ENCODE measurements at regions of chr13 and their contacts with region 1.

Region 1: GRCh38 chr13:50512474-50513299 is 330.8 kb downstream of the DLEU7 start:
- DNase-seq: peak; percentile 95
- H3K4me3 ChIP-seq: peak overlapping the region; percentile 65
- H3K27ac ChIP-seq: peak overlapping the region; percentile 98
- H3K4me1 ChIP-seq: peaks cover 78% of the 10 kb centered on the region
- CTCF ChIP-seq: peak; percentile 68

Region 2: GRCh38 chr13:49936085-49936940 is 576.4 kb before region 1 on chr13 and contains the start of gene SPRYD7:
- CTCF ChIA-PET with region 1: no interaction called
- POLR2A ChIA-PET with region 1: no interaction called
- intact Hi-C with region 1: loop called (anchors 2 kb)
- DNase-seq: peak; percentile 98
- H3K4me3 ChIP-seq: peak within 1 kb of the TSS; percentile 81
- H3K27ac ChIP-seq: peak within 1 kb of the TSS; percentile 34
- H3K4me1 ChIP-seq: peaks cover 29% of the 10 kb centered on the region
- CTCF ChIP-seq: peak; percentile 84
- total RNA-seq, gene SPRYD7: 5.0 and 6.8 TPM in 2 replicates

Region 3: DNA sequence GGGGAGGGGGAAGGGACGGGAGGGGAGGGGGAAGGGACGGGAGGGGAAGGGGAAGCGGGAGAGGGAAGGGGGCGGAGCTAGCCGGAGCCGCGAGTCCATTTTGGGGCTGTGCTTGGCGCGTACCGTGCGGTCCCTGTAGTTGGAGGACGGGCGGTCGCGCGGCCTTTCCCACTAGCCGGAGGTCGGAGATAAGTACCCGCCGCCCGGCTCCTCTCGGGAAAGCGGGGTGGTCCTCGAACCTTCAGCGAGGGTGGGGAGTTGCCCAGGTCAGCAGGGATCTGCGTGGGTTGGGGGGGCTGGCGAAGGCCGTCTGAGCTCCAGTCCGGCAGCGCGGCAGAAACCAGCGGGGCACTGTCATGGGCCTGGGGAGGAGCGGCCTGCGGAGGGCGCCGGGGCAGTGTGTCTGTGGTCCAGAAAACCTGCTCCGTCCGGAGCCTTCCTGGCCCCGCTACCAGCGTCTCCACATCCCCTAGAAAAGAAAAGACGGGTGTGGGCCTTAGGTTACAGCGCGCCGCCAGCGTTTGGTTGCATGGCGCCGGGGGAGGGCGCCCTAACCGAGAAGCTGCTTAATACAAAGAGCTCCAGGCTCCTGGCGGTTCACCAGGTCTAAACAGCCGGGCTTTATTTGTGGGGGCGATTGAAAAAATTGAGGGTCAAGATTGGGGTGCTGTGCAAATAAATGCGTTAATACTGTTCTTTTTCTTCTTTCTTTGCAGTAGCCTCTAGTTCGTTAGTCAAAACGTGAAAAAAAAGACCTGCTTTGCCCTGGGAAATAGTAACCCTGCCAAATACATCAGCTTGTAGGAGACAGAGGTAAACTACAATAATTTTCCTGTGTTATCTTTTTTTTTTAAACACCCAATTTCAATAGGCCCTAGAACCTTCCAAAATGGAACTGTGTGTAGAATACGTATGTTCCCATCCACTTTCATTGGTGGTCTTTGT is 515.5 kb before region 1 on chr13 and contains the start of gene TRIM13:
- CTCF ChIA-PET with region 1: no interaction called
- POLR2A ChIA-PET with region 1: no interaction called
- intact Hi-C with region 1: loop called (anchors 5 kb)
- DNase-seq: peak; percentile 92
- H3K4me3 ChIP-seq: peak within 1 kb of the TSS; percentile 94
- H3K27ac ChIP-seq: peak within 1 kb of the TSS; percentile 87
- H3K4me1 ChIP-seq: peaks cover 39% of the 10 kb centered on the region
- CTCF ChIP-seq: peak; percentile 97
- total RNA-seq, gene TRIM13: 9.5 and 12.5 TPM in 2 replicates

Region 4: GRCh38 chr13:50376895-50377575 is 135.7 kb before region 1 on chr13:
- CTCF ChIA-PET with region 1: no interaction called
- POLR2A ChIA-PET with region 1: interaction called, 5 read pairs
- intact Hi-C with region 1: loop called (anchors 1 kb)
- DNase-seq: no peak
- H3K4me3 ChIP-seq: no peak overlapping the region
- H3K27ac ChIP-seq: no peak overlapping the region
- H3K4me1 ChIP-seq: peaks cover 42% of the 10 kb centered on the region
- CTCF ChIP-seq: peak; percentile 42; the same call in 1 of the 2 replicates

Region 5: DNA sequence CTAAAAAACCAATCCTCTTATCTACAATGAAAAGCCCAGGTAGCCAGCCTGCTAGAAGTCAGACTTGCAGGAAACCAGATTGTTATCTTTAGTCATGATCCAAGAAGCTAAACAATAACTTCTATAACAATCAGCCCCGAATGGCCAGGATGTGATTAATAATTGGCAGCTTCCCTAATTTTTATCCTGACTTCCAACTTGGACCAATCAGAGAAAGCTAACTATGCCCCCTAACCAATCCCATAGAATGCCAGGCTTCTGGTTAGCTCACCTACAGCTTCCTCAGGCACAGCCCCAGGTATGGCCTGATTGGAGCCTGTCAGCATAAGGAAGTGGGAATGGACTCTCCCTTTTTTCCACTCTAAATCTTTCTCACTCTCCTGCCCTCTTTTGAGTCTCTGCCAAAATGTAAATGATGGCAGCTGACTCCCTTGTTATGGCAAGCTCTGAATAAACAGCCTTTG is 64.1 kb before region 1 on chr13:
- CTCF ChIA-PET with region 1: no interaction called
- POLR2A ChIA-PET with region 1: no interaction called
- intact Hi-C with region 1: no loop called
- DNase-seq: no peak
- H3K4me3 ChIP-seq: no peak overlapping the region
- H3K27ac ChIP-seq: no peak overlapping the region
- H3K4me1 ChIP-seq: peaks cover 5% of the 10 kb centered on the region
- CTCF ChIP-seq: no peak